H1 (cell line): ENCODE measurements at regions of chr4 and their contacts with region 1.

Region 1: DNA sequence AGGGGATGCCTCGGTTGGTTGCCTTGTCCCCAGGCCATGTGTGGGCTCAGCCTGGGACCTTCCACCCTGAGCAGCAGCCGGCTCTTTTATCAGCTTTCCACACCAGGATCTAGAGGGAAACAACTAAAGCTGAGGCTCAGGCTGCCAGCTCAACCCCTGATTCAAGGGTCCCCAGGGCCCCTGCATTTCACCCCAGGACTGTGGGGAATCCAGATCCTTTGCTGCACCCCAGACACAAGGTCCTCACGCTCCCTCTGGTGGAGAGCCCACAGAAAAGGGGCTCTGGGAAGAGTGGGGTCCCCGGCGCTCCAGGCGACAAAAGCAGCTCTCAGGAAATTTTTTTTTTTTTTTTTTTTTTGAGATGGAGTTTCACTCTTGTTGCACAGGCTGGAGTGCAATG is 64.3 kb downstream of the ZFYVE28 start:
- DNase-seq: no peak
- H3K4me3 ChIP-seq: no peak overlapping the region
- H3K27ac ChIP-seq: no peak overlapping the region
- H3K4me1 ChIP-seq: peaks cover 1 to 6% (median 3%) of the 10 kb centered on the region in 4 experiments; a peak in 5 of 7 replicates
- H3K27me3 ChIP-seq: no peaks in the 10 kb centered on the region
- CTCF ChIP-seq: peak in 2 of 3 experiments; percentile 41 to 61; a peak in 3 of 4 replicates
- EP300 ChIP-seq: no peak
- POLR2A ChIP-seq: no peak
- RAD21 ChIP-seq: peak; percentile 72 to 77

Region 2: DNA sequence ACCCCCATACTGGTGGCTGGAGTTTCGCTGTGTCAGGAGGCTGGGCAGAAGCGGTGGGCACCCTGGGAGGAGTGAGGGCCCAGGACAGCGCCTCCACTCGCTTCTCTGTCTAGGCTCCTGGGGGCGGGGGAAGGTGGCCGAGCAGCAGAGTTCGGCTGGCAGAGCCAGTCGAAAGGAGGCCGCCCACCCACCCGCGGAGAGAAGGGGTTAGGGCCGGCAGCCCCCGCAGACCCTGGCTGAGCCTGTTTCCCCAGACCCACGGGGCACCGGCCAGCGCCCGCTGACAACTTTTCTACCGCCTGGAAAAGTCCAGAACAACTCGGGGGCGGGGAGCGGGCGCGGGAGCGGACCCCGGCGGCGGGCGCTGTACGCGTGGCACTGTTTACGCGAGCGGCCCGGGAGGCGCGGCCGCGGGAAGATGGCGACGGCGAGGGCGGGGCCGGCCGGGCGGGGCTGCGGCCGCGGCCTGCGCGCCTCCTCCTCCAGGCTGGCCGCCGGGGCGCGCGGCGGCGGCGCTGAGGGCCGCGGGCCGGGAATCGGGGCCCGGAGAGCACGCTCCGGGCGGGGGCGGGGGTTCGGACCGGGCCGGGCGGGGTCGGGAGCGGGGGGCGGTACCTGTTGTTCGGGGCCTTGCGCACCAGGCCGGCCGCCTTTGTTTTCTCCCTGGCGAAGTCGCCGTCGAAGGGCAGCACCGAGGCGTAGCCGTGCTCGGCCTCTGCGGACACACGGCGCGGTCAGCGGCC is 92.8 kb before region 1 on chr4:
- CTCF ChIA-PET with region 1: no interaction called
- POLR2A ChIA-PET with region 1: no interaction called
- DNase-seq: peak in 1 of 2 experiments; percentile 78
- H3K4me3 ChIP-seq: peak overlapping the region; percentile 51 to 89 (median 59)
- H3K27ac ChIP-seq: no peak overlapping the region
- H3K4me1 ChIP-seq: peaks cover 0 to 9% (median 4%) of the 10 kb centered on the region in 4 experiments; a peak in 5 of 7 replicates
- H3K27me3 ChIP-seq: no peaks in the 10 kb centered on the region
- CTCF ChIP-seq: no peak
- EP300 ChIP-seq: no peak
- POLR2A ChIP-seq: no peak
- RAD21 ChIP-seq: no peak

Region 3: GRCh38 chr4:2343476-2343875 is 10.6 kb before region 1 on chr4:
- CTCF ChIA-PET with region 1: interaction called, 10 read pairs
- POLR2A ChIA-PET with region 1: no interaction called
- DNase-seq: no peak
- H3K4me3 ChIP-seq: no peak overlapping the region
- H3K27ac ChIP-seq: no peak overlapping the region
- H3K4me1 ChIP-seq: peaks cover 0 to 15% (median 5%) of the 10 kb centered on the region in 4 experiments; a peak in 6 of 7 replicates
- H3K27me3 ChIP-seq: no peaks in the 10 kb centered on the region
- CTCF ChIP-seq: no peak
- EP300 ChIP-seq: no peak
- POLR2A ChIP-seq: no peak
- RAD21 ChIP-seq: no peak

Region 4: GRCh38 chr4:2366252-2367192 is 12.4 kb after region 1 on chr4:
- CTCF ChIA-PET with region 1: no interaction called
- POLR2A ChIA-PET with region 1: no interaction called
- DNase-seq: no peak
- H3K4me3 ChIP-seq: no peak overlapping the region
- H3K27ac ChIP-seq: no peak overlapping the region; the same call in 1 of the 2 replicates
- H3K4me1 ChIP-seq: no peaks in the 10 kb centered on the region; a peak in 1 of 7 replicates
- H3K27me3 ChIP-seq: no peaks in the 10 kb centered on the region; a peak in 1 of 7 replicates
- CTCF ChIP-seq: no peak
- EP300 ChIP-seq: no peak
- POLR2A ChIP-seq: no peak
- RAD21 ChIP-seq: no peak

Region 5: DNA sequence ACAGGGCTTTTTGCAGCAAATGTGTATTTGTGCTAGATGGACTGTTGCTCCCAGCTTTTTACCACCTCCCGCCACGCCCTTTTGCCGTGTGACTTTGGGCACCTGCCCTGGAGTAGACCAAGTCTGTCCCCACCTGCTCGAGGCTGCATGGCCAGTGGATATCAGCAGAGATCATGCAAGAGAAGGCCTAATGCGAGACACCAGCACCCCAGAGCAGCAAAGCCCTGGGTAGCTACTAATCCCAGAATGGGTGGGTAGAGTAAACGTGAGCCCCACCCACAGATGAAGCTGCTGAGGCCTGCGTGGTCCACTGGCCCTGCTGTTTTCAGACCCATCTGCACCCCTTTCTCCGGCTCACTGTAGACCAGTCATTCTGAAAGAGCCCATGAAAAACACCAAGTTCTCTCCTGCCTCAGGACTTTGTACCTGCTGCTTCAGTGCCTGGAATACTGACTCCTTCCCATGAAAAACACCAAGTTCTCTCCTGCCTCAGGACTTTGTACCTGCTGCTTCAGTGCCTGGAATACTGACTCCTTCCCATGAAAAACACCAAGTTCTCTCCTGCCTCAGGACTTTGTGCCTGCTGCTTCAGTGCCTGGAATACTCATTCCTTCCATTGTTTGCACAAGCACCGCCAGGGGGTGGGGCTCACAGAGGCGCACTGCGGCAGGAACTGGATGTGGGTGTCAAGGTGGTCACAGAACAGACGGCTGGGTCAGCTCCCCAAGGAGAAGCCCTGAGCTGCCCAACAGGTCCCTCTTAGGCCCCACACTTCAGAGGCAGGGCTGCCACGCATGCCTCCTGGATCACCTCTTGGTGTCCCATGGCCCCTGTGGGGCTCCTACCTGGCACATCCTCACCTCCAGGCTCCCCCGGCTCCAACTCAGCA is 407.2 kb after region 1 on chr4:
- CTCF ChIA-PET with region 1: no interaction called
- POLR2A ChIA-PET with region 1: no interaction called
- DNase-seq: no peak
- H3K4me3 ChIP-seq: no peak overlapping the region
- H3K27ac ChIP-seq: no peak overlapping the region
- H3K4me1 ChIP-seq: peaks cover 0 to 4% (median 3%) of the 10 kb centered on the region in 4 experiments; a peak in 4 of 7 replicates
- H3K27me3 ChIP-seq: peaks cover 0 to 2% (median under 1%) of the 10 kb centered on the region in 4 experiments; a peak in 1 of 7 replicates
- CTCF ChIP-seq: no peak
- EP300 ChIP-seq: no peak
- POLR2A ChIP-seq: no peak
- RAD21 ChIP-seq: no peak